Naive thymus-derived CD4-positive, alpha-beta T cell (primary cell): ENCODE measurements at regions of chr2 and their contacts with region 1.

Region 1: DNA sequence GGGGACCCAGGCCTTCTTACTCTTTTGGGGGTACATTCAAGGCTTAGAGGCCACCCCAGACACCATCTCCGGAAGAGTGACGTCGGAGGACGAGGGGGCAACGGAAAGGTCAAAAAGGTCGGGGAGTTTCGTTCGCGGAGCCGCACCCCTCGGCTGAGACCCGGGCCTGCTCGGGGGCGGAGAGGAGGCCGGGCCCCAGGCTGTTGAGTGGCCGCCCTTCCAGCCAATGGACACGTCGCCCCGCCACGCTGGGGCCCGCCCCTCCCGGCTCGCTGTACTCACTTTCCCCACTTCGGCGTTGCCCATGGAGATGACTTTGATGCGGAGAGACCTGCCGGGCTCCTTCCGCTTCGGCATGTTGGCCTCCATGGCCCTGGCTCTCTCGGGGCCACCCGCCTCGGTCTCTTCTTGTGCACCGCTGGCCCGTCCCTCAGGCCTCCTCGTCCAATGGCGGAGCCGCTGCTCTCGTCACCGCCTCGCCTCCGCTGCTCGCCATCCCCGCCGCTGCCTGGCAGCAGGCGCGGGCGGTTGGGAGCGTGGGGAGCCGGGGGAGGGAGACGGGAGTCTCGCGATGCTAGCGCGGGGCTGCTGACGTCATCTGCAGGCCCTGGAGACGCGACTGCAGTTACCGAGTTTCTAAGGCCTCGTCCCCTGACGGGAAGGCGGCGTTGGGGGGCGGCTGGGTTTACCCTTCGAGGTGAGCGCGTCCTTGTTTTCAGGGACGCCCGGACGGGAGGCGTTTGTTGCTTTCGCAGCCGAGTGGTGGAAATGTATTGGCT is at the start of gene DNAJC27:
- DNase-seq: peak; percentile 97 to 99 (median 99)
- ATAC-seq: peak; percentile 93
- H3K4me3 ChIP-seq: peak within 1 kb of the TSS; percentile 90
- H3K4me3 Mint-ChIP-seq: peak within 1 kb of the TSS; percentile 96 to 99 (median 98)
- H3K27ac ChIP-seq: peak within 1 kb of the TSS; percentile 98
- H3K27ac Mint-ChIP-seq: peak within 1 kb of the TSS; percentile 99 to 100 (median 100)
- H3K4me1 ChIP-seq: peaks cover 0 to 17% of the 10 kb centered on the region in 2 donors
- H3K4me1 Mint-ChIP-seq: peaks cover 6 to 46% (median 30%) of the 10 kb centered on the region in 7 donors
- H3K27me3 ChIP-seq: no peaks in the 10 kb centered on the region
- H3K27me3 Mint-ChIP-seq: no peaks in the 10 kb centered on the region
- total RNA-seq, gene DNAJC27: 5.9 to 22.0 (median 18.1) TPM

Region 2: DNA sequence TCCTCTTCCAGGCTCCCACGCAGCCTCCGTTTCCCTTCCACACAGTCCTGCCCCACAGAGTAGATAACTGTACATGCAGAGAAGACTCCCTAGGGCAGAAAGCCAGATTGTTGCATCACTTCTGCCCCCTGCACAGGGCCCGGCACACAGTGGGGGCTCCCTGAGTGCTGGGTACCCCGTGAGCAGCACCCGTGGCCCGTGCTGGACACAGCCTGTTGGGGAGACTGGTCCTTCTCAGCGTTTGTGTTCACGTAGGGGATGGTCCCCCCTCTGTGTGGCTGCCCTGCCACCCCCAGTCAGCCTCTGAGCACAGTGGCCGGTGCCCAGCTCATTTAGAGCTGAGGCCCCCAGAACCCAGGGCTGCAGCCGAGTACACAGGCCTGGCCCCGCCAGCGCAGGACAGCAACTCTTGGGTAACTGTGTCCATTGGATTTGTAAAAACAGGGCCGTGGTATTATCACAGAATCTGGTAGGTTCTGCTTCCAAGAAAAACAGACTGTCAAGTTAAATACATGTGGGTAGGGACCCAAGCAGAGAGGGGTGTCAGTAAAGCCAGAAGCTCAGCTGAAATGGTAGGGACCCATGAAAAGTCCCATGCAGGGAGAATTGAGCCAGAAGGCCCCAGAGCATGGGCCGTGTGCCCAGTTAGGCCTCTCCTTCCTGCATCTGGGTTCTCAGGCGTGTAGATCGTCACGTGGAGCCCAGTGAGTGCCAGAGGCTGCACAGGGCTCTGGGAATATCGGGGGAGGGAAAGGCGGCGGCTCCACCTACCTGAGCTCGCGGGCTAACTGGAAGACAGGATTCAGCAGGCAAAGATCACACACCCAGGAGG is 1302.1 kb before region 1 on chr2:
- CTCF ChIA-PET with region 1: no interaction called
- POLR2A ChIA-PET with region 1: no interaction called
- intact Hi-C with region 1: no loop called
- DNase-seq: no peak
- ATAC-seq: no peak
- H3K4me3 ChIP-seq: no peak overlapping the region
- H3K4me3 Mint-ChIP-seq: no peak overlapping the region
- H3K27ac ChIP-seq: no peak overlapping the region
- H3K27ac Mint-ChIP-seq: peak overlapping the region in 1 of 9 donors; percentile 51
- H3K4me1 ChIP-seq: no peaks in the 10 kb centered on the region
- H3K4me1 Mint-ChIP-seq: peaks cover 0 to 4% (median 0%) of the 10 kb centered on the region in 7 donors
- H3K27me3 ChIP-seq: no peaks in the 10 kb centered on the region
- H3K27me3 Mint-ChIP-seq: no peaks in the 10 kb centered on the region

Region 3: GRCh38 chr2:23926750-23927571 is 1044.8 kb before region 1 on chr2 and contains the start of gene ATAD2B:
- CTCF ChIA-PET with region 1: no interaction called
- POLR2A ChIA-PET with region 1: no interaction called
- intact Hi-C with region 1: loop called in 1 of 2 experiments (anchors 2 kb)
- DNase-seq: peak; percentile 90 to 97 (median 95)
- ATAC-seq: peak; percentile 90
- H3K4me3 ChIP-seq: peak within 1 kb of the TSS; percentile 94
- H3K4me3 Mint-ChIP-seq: peak within 1 kb of the TSS; percentile 95 to 99 (median 98)
- H3K27ac ChIP-seq: peak within 1 kb of the TSS; percentile 97
- H3K27ac Mint-ChIP-seq: peak within 1 kb of the TSS; percentile 95 to 100 (median 99)
- H3K4me1 ChIP-seq: peaks cover 20 to 31% of the 10 kb centered on the region in 2 donors
- H3K4me1 Mint-ChIP-seq: peaks cover 34 to 57% (median 46%) of the 10 kb centered on the region in 7 donors
- H3K27me3 ChIP-seq: no peaks in the 10 kb centered on the region
- H3K27me3 Mint-ChIP-seq: peaks cover 0 to 4% (median 0%) of the 10 kb centered on the region in 5 donors
- total RNA-seq, gene ATAD2B: 31.8 to 55.8 (median 43.3) TPM

Region 4: GRCh38 chr2:24409700-24410556 is 561.8 kb before region 1 on chr2:
- CTCF ChIA-PET with region 1: no interaction called
- POLR2A ChIA-PET with region 1: no interaction called
- intact Hi-C with region 1: loop called in 1 of 2 experiments (anchors 5 kb)
- DNase-seq: peak in 7 of 9 donors; percentile 19 to 59 (median 51)
- ATAC-seq: peak; percentile 79
- H3K4me3 ChIP-seq: no peak overlapping the region
- H3K4me3 Mint-ChIP-seq: no peak overlapping the region
- H3K27ac ChIP-seq: no peak overlapping the region
- H3K27ac Mint-ChIP-seq: no peak overlapping the region
- H3K4me1 ChIP-seq: no peaks in the 10 kb centered on the region
- H3K4me1 Mint-ChIP-seq: no peaks in the 10 kb centered on the region
- H3K27me3 ChIP-seq: no peaks in the 10 kb centered on the region
- H3K27me3 Mint-ChIP-seq: peaks cover 2 to 19% (median 6%) of the 10 kb centered on the region in 5 donors

Region 5: DNA sequence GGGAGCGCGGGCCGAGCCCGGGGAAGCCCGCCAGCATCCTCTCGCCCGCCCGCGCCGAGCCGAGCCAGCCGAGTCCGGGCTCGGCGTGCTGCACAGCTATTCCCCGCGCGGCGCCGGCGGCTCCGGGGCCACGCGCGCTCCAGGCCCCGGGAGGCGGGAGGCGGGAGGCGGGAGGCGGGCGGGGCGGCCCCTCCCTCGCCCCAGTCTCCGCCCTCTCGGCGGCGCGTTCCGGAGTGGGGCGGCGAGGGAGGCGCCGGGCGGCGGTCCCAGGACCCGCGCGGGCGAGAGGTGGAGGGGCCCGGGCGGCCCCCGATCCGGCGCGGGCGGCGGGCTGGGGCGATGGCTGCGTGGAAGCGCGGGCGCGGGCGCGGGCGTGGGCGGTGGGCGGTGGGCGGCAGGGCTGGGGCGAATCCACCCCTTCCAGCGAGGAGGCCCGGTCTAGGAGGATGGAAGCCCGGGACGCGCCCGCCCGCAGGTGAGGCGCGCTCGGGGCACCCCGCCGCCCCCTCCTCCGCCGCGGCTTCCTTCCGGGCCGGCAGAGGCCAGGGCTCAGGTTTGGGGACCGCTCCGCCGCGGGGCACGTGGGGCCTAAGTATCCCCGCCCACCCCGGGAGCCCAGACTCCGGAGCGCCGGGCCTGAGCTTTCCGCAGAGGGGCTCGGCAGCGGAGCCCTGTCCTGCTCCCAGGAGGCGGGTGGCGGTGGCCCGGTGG is 51.5 kb before region 1 on chr2 and contains the start of gene ADCY3:
- CTCF ChIA-PET with region 1: no interaction called
- POLR2A ChIA-PET with region 1: no interaction called
- intact Hi-C with region 1: loop called (anchors 1 kb)
- DNase-seq: peak; percentile 24 to 76 (median 48)
- ATAC-seq: peak; percentile 74
- H3K4me3 ChIP-seq: peak within 1 kb of the TSS; percentile 40
- H3K4me3 Mint-ChIP-seq: peak within 1 kb of the TSS; percentile 85 to 93 (median 92)
- H3K27ac ChIP-seq: peak within 1 kb of the TSS; percentile 55
- H3K27ac Mint-ChIP-seq: peak within 1 kb of the TSS; percentile 45 to 82 (median 67)
- H3K4me1 ChIP-seq: peaks cover 16 to 17% of the 10 kb centered on the region in 2 donors
- H3K4me1 Mint-ChIP-seq: peaks cover 18 to 40% (median 32%) of the 10 kb centered on the region in 7 donors
- H3K27me3 ChIP-seq: no peaks in the 10 kb centered on the region
- H3K27me3 Mint-ChIP-seq: peaks cover 0 to 4% (median 0%) of the 10 kb centered on the region in 5 donors
- total RNA-seq, gene ADCY3: 4.4 to 44.7 (median 18.7) TPM

Region 6: GRCh38 chr2:25165992-25166875 is 194.5 kb after region 1 on chr2:
- CTCF ChIA-PET with region 1: no interaction called
- POLR2A ChIA-PET with region 1: no interaction called
- intact Hi-C with region 1: no loop called
- DNase-seq: peak in 7 of 9 donors; percentile 12 to 46 (median 40)
- ATAC-seq: peak; percentile 69
- H3K4me3 ChIP-seq: no peak overlapping the region
- H3K4me3 Mint-ChIP-seq: peak overlapping the region in 7 of 10 donors; percentile 15 to 83 (median 68)
- H3K27ac ChIP-seq: no peak overlapping the region
- H3K27ac Mint-ChIP-seq: peak overlapping the region in 2 of 9 donors; percentile 2 to 69
- H3K4me1 ChIP-seq: no peaks in the 10 kb centered on the region
- H3K4me1 Mint-ChIP-seq: peaks cover 6 to 36% (median 26%) of the 10 kb centered on the region in 7 donors
- H3K27me3 ChIP-seq: no peaks in the 10 kb centered on the region
- H3K27me3 Mint-ChIP-seq: peaks cover 11 to 73% (median 35%) of the 10 kb centered on the region in 5 donors

Region 7: DNA sequence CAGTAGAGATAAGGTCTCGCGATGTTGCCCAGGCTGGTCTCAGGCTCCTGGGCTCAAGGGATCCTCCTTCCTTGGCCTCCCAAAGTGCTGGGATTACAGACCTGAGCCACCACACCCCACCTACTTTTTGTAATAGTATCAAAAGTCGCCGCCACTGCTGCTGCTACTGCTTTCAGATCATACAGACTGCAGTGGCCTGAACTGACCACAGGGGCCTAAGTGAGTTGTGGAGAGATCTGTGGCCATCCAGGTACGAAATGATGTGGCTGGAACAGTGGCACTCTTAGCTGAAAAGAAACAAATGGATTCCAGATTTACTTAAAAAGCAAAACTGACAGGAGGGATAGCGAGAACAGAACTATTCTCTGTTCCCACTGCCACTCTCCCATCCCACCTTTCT is 229.5 kb after region 1 on chr2:
- CTCF ChIA-PET with region 1: interaction called, 11 read pairs
- POLR2A ChIA-PET with region 1: no interaction called
- intact Hi-C with region 1: loop called (anchors 1 kb)
- DNase-seq: no peak
- ATAC-seq: no peak
- H3K4me3 ChIP-seq: no peak overlapping the region
- H3K4me3 Mint-ChIP-seq: no peak overlapping the region
- H3K27ac ChIP-seq: no peak overlapping the region
- H3K27ac Mint-ChIP-seq: peak overlapping the region in 1 of 9 donors; percentile 33
- H3K4me1 ChIP-seq: peaks cover 0 to 7% of the 10 kb centered on the region in 2 donors
- H3K4me1 Mint-ChIP-seq: peaks cover under 1 to 17% (median 14%) of the 10 kb centered on the region in 7 donors
- H3K27me3 ChIP-seq: no peaks in the 10 kb centered on the region
- H3K27me3 Mint-ChIP-seq: peaks cover 0 to 18% (median 0%) of the 10 kb centered on the region in 5 donors

Region 8: GRCh38 chr2:25376750-25377621 is 405.3 kb after region 1 on chr2:
- CTCF ChIA-PET with region 1: no interaction called
- POLR2A ChIA-PET with region 1: no interaction called
- intact Hi-C with region 1: loop called in 1 of 2 experiments (anchors 1 kb)
- DNase-seq: peak; percentile 89 to 94 (median 92)
- ATAC-seq: peak; percentile 99
- H3K4me3 ChIP-seq: peak overlapping the region; percentile 53
- H3K4me3 Mint-ChIP-seq: peak overlapping the region; percentile 67 to 87 (median 74)
- H3K27ac ChIP-seq: peak overlapping the region; percentile 66
- H3K27ac Mint-ChIP-seq: peak overlapping the region; percentile 90 to 97 (median 94)
- H3K4me1 ChIP-seq: peaks cover 28 to 31% of the 10 kb centered on the region in 2 donors
- H3K4me1 Mint-ChIP-seq: peaks cover 29 to 49% (median 32%) of the 10 kb centered on the region in 7 donors
- H3K27me3 ChIP-seq: no peaks in the 10 kb centered on the region
- H3K27me3 Mint-ChIP-seq: no peaks in the 10 kb centered on the region

Region 9: GRCh38 chr2:26345545-26346453 is 1374.1 kb after region 1 on chr2 and contains the start of gene SELENOI:
- CTCF ChIA-PET with region 1: no interaction called
- POLR2A ChIA-PET with region 1: no interaction called
- intact Hi-C with region 1: loop called (anchors 5 kb)
- DNase-seq: peak; percentile 99 to 100 (median 99)
- ATAC-seq: peak; percentile 97
- H3K4me3 ChIP-seq: peak within 1 kb of the TSS; percentile 81
- H3K4me3 Mint-ChIP-seq: peak within 1 kb of the TSS; percentile 84 to 100 (median 98)
- H3K27ac ChIP-seq: peak within 1 kb of the TSS; percentile 88
- H3K27ac Mint-ChIP-seq: peak within 1 kb of the TSS; percentile 95 to 100 (median 99)
- H3K4me1 ChIP-seq: peaks cover 24 to 25% of the 10 kb centered on the region in 2 donors
- H3K4me1 Mint-ChIP-seq: peaks cover 28 to 62% (median 40%) of the 10 kb centered on the region in 7 donors
- H3K27me3 ChIP-seq: no peaks in the 10 kb centered on the region
- H3K27me3 Mint-ChIP-seq: no peaks in the 10 kb centered on the region
- total RNA-seq, gene SELENOI: 19.0 to 33.6 (median 22.4) TPM